Gastrocnemius medialis (tissue), 4 donors: ENCODE measurements at regions of chr7 and their contacts with region 1.

Region 1: GRCh38 chr7:98168181-98168905 is 42.9 kb upstream of the BHLHA15 start:
- DNase-seq: peak; percentile 72 to 77
- ATAC-seq: peak; percentile 92 to 97
- H3K4me3 ChIP-seq: no peak overlapping the region
- H3K27ac ChIP-seq: peak overlapping the region; percentile 5 to 90 (median 79)
- H3K4me1 ChIP-seq: peaks cover 22 to 23% of the 10 kb centered on the region in 2 donors
- H3K27me3 ChIP-seq: no peaks in the 10 kb centered on the region
- CTCF ChIP-seq: peak; percentile 77 to 94 (median 81)
- POLR2A ChIP-seq: no peak

Region 2: GRCh38 chr7:98251841-98252639 is 83.7 kb after region 1 on chr7 and contains the start of gene TECPR1:
- in situ Hi-C with region 1: no loop called
- intact Hi-C with region 1: loop called (anchors 2 kb)
- DNase-seq: peak; percentile 94 to 95
- ATAC-seq: peak; percentile 94 to 96
- H3K4me3 ChIP-seq: peak within 1 kb of the TSS; percentile 74 to 93 (median 86)
- H3K27ac ChIP-seq: peak within 1 kb of the TSS; percentile 85 to 94 (median 88)
- H3K4me1 ChIP-seq: peaks cover 18 to 28% of the 10 kb centered on the region in 2 donors
- H3K27me3 ChIP-seq: no peaks in the 10 kb centered on the region
- CTCF ChIP-seq: peak in 1 of 5 experiments; percentile 18
- POLR2A ChIP-seq: peak; percentile 45 to 60
- total RNA-seq, gene TECPR1: 16.0 to 59.6 (median 33.9) TPM